Aorta (tissue), 5 donors: ENCODE measurements at regions of chr6 and their contacts with region 1.

Region 1: GRCh38 chr6:28136585-28137504 is 4.8 kb upstream of the ZKSCAN8 start:
- DNase-seq: peak; percentile 94 to 96
- ATAC-seq: peak; percentile 94
- H3K4me3 ChIP-seq: peak overlapping the region; percentile 88 to 91
- H3K27ac ChIP-seq: peak overlapping the region; percentile 91 to 99
- H3K4me1 ChIP-seq: no peaks in the 10 kb centered on the region
- H3K27me3 ChIP-seq: no peaks in the 10 kb centered on the region

Region 2: DNA sequence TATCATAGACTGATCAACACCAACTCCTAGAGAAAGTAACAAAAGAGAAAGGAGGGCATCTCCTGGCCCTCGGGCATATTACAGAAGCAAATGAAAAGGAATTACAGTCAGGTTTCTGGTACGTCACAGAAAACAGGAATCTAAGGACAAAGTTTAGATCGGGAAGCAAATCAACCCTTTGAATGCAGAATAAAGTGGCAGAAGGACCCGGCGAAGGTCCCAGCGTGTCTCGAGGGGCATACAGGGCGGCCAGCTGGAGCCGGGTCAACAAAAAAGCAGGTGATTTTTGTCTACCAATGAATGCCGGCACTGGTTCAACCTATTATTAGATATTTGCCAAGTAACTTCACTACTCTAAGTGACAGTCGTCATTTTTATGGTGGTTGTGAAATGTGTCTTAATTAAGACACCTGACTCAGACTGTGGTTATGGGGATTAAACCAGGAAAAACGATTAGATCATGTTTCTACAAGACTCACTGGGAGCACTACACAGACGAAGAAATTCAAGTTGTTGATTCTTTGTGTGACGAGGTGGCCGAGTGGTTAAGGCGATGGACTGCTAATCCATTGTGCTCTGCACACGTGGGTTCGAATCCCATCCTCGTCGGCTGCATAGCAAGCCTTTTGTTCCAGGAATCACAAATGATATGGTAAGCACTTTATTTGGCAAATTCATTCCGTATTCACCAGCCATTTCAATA is 75.8 kb after region 1 on chr6:
- intact Hi-C with region 1: loop called (anchors 5 to 10 kb)
- DNase-seq: no peak
- ATAC-seq: no peak
- H3K4me3 ChIP-seq: peak overlapping the region in 1 of 2 donors; percentile 18
- H3K27ac ChIP-seq: no peak overlapping the region
- H3K4me1 ChIP-seq: no peaks in the 10 kb centered on the region
- H3K27me3 ChIP-seq: no peaks in the 10 kb centered on the region

Region 3: GRCh38 chr6:28252009-28252975 is 115.4 kb after region 1 on chr6 and contains the start of gene ZKSCAN4:
- intact Hi-C with region 1: loop called (anchors 10 kb)
- DNase-seq: peak; percentile 84 to 85
- ATAC-seq: peak; percentile 95
- H3K4me3 ChIP-seq: peak within 1 kb of the TSS; percentile 87 to 98
- H3K27ac ChIP-seq: no peak within 1 kb of the TSS
- H3K4me1 ChIP-seq: no peaks in the 10 kb centered on the region
- H3K27me3 ChIP-seq: no peaks in the 10 kb centered on the region
- total RNA-seq, gene ZKSCAN4: 4.0 to 6.8 TPM